WTC11 (cell line): ENCODE measurements at regions of chr17 and their contacts with region 1.

Region 1: GRCh38 chr17:10844621-10845387 is 6.9 kb upstream of the PIRT start:
- DNase-seq: peak; percentile 82
- ATAC-seq: peak; percentile 89
- H3K4me3 Mint-ChIP-seq: peak overlapping the region; percentile 82
- H3K27ac Mint-ChIP-seq: no peak overlapping the region
- H3K4me1 Mint-ChIP-seq: peaks cover 21% of the 10 kb centered on the region
- H3K27me3 Mint-ChIP-seq: peaks cover 24% of the 10 kb centered on the region
- CTCF ChIP-seq: peak; percentile 93

Region 2: GRCh38 chr17:10646392-10646990 is 198.3 kb before region 1 on chr17:
- CTCF ChIA-PET with region 1: interaction called, 12 read pairs
- POLR2A ChIA-PET with region 1: no interaction called
- DNase-seq: peak; percentile 83
- ATAC-seq: peak; percentile 90
- H3K4me3 Mint-ChIP-seq: no peak overlapping the region
- H3K27ac Mint-ChIP-seq: no peak overlapping the region
- H3K4me1 Mint-ChIP-seq: no peaks in the 10 kb centered on the region
- H3K27me3 Mint-ChIP-seq: no peaks in the 10 kb centered on the region
- CTCF ChIP-seq: peak; percentile 67

Region 3: DNA sequence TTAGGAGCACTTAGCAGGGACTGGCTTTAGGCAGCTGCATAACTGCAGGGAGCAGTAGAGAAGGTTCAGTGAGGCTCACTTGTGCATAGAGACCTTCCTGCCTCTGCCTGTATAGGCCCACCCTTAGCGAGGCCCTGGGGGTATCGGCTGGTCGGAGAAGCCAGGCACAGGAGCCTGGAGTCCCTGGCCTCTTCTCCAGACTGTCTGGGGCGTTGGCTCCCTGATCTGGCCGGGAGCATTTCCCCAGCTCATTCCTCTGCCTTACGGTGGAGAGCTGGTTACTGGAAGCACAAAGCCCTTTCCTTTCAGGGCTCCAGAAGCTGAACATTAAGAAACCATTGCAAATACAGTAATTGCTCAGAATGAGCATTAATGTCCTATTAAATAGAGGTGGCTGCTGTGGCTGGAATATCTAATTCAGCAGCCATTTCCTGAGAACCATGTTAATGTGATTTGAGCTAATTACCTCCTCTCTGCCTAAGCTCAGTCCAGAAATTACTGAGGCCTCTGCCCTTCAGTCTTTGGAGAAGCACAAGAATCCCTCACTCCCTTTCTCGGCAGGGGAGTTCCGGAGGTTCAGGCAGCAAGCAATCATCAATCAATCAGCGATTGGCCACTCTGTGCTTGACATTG is 96.2 kb before region 1 on chr17:
- CTCF ChIA-PET with region 1: interaction called, 50 read pairs
- POLR2A ChIA-PET with region 1: no interaction called
- DNase-seq: no peak
- ATAC-seq: peak; percentile 69
- H3K4me3 Mint-ChIP-seq: no peak overlapping the region
- H3K27ac Mint-ChIP-seq: no peak overlapping the region
- H3K4me1 Mint-ChIP-seq: peaks cover 19% of the 10 kb centered on the region
- H3K27me3 Mint-ChIP-seq: no peaks in the 10 kb centered on the region
- CTCF ChIP-seq: no peak

Region 4: DNA sequence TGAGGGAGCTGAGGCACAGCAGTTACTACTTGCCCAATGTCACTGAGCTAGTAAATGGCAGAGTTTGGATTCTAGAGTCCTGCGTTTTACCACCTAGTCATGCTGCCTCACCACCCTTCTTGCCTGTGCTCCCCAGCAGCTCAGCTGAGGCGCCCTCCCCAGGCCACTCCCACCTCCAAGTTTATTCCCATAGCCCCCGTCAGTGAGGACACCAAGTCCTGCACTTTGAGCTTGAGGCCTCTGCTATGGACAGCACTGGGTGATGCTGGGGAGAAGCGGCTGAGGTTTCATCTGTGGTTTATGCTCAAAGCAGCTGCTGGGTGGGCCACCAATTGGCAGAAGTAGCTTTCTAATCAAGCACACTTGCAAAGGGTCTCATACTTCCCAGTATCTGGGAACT is 77.6 kb before region 1 on chr17:
- CTCF ChIA-PET with region 1: interaction called, 84 read pairs
- POLR2A ChIA-PET with region 1: interaction called, 4 read pairs
- DNase-seq: no peak
- ATAC-seq: no peak; the same call in 1 of the 2 replicates
- H3K4me3 Mint-ChIP-seq: no peak overlapping the region
- H3K27ac Mint-ChIP-seq: no peak overlapping the region
- H3K4me1 Mint-ChIP-seq: 0 out of 2 replicates have a peak, but pooled peaks cover under 1% of the 10 kb centered on the region
- H3K27me3 Mint-ChIP-seq: no peaks in the 10 kb centered on the region; the same call in 1 of the 2 replicates
- CTCF ChIP-seq: no peak

Region 5: DNA sequence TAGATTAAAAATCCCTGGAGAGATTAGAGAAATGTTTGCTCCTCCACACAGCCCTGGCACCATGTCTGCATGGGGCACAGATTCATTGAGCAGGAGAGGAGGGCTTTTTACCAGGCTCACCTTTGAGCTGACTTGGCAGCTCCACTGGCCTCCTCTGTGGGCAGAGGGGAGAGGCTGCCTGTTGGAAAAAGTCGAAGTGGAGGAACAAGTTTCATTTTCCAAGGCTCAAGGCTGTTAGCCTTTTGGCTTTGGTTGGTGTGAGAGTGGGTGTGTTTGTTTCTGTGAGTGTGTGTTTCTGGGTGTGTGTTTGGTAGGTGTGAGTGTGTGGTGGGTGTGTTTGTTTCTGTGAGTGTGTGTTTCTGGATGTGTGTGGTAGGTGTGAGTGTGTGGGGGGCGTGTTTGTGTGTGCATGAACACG is 46.5 kb before region 1 on chr17:
- CTCF ChIA-PET with region 1: interaction called, 12 read pairs
- POLR2A ChIA-PET with region 1: no interaction called
- DNase-seq: no peak
- ATAC-seq: no peak
- H3K4me3 Mint-ChIP-seq: no peak overlapping the region
- H3K27ac Mint-ChIP-seq: no peak overlapping the region
- H3K4me1 Mint-ChIP-seq: peaks cover 4% of the 10 kb centered on the region; the same call in 1 of the 2 replicates
- H3K27me3 Mint-ChIP-seq: no peaks in the 10 kb centered on the region
- CTCF ChIP-seq: no peak

Region 6: GRCh38 chr17:10888858-10889257 is 44.1 kb after region 1 on chr17:
- CTCF ChIA-PET with region 1: no interaction called
- POLR2A ChIA-PET with region 1: no interaction called
- DNase-seq: no peak
- ATAC-seq: peak; percentile 36; the same call in 1 of the 2 replicates
- H3K4me3 Mint-ChIP-seq: no peak overlapping the region
- H3K27ac Mint-ChIP-seq: no peak overlapping the region
- H3K4me1 Mint-ChIP-seq: no peaks in the 10 kb centered on the region
- H3K27me3 Mint-ChIP-seq: peaks cover 7% of the 10 kb centered on the region
- CTCF ChIP-seq: no peak

Region 7: GRCh38 chr17:10907370-10907769 is 62.6 kb after region 1 on chr17:
- CTCF ChIA-PET with region 1: no interaction called
- POLR2A ChIA-PET with region 1: no interaction called
- DNase-seq: no peak
- ATAC-seq: no peak
- H3K4me3 Mint-ChIP-seq: no peak overlapping the region
- H3K27ac Mint-ChIP-seq: no peak overlapping the region
- H3K4me1 Mint-ChIP-seq: no peaks in the 10 kb centered on the region
- H3K27me3 Mint-ChIP-seq: peaks cover 4% of the 10 kb centered on the region; the same call in 1 of the 2 replicates
- CTCF ChIP-seq: no peak

Region 8: DNA sequence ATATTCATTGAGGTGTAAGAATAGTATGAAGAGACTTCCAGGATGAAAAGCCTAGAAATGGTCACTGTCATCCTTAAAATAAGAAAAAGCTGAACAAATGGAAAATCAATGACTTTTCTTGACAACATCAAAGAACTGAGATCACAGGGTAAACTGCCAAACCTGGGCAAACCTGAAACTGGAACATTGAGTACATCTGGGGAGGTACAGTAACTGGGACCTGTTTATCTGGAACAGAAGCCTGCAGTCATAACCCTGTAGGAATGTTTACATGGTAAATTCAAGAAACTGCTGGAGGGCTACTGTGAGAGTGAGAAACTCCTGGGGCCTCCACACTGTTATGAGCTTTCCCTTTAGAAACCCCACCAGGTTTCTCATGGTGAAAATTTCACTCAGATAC is 123.2 kb after region 1 on chr17:
- CTCF ChIA-PET with region 1: no interaction called
- POLR2A ChIA-PET with region 1: no interaction called
- DNase-seq: no peak
- ATAC-seq: no peak
- H3K4me3 Mint-ChIP-seq: no peak overlapping the region
- H3K27ac Mint-ChIP-seq: no peak overlapping the region
- H3K4me1 Mint-ChIP-seq: no peaks in the 10 kb centered on the region
- H3K27me3 Mint-ChIP-seq: no peaks in the 10 kb centered on the region; the same call in 1 of the 2 replicates
- CTCF ChIP-seq: no peak